Naive thymus-derived CD4-positive, alpha-beta T cell (primary cell): ENCODE measurements at regions of chr2 and their contacts with region 1.

Region 1: DNA sequence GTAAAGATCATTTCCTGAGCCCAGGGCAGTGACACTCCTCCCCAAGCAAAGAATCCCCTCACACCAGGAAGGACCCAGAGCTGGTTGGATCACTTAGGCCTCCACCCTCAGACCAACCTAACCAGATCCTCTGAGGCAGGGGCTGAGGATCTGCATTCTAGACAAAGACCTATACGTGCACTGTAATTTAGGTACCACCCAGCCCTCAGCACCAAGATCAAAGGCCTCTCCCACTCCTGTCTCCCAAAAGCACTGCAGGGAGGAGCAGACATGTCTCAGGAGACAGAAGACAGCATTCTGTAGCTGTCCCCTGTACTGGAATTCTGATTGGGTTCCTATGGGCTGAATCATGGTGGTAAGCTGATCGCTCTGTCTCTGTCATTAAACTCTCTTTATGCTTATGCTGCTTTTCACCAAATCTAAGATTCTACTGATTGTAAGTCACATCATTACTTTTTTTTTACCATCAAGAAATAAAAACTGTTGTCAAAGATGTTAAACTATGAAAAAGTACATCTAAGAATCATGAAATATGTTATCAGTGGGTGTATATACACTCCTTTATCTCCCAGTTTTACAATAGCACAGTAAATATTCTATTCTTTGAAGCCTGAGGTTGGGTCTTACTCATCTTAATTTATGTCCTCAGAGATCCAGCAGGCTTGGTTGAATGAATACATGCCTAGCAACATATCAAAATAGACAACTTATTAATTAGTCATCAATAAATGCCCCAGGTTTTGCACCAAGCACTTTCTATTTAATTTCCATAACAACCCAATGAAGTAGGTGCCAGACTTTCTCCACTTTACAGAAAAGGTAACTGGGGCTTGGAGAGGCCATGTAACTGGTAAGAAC is 28.3 kb downstream of the MCFD2 start:
- DNase-seq: no peak
- ATAC-seq: no peak
- H3K4me3 ChIP-seq: no peak overlapping the region
- H3K4me3 Mint-ChIP-seq: no peak overlapping the region
- H3K27ac ChIP-seq: no peak overlapping the region
- H3K27ac Mint-ChIP-seq: no peak overlapping the region
- H3K4me1 ChIP-seq: no peaks in the 10 kb centered on the region
- H3K4me1 Mint-ChIP-seq: peaks cover 0 to 2% (median 0%) of the 10 kb centered on the region in 7 donors
- H3K27me3 ChIP-seq: no peaks in the 10 kb centered on the region
- H3K27me3 Mint-ChIP-seq: peaks cover 0 to 31% (median 4%) of the 10 kb centered on the region in 5 donors

Region 2: GRCh38 chr2:45993476-45993991 is 893.7 kb before region 1 on chr2:
- CTCF ChIA-PET with region 1: no interaction called
- POLR2A ChIA-PET with region 1: no interaction called
- intact Hi-C with region 1: loop called in 1 of 2 experiments (anchors 1 kb)
- DNase-seq: peak in 8 of 9 donors; percentile 46 to 75 (median 64)
- ATAC-seq: peak; percentile 75
- H3K4me3 ChIP-seq: no peak overlapping the region
- H3K4me3 Mint-ChIP-seq: no peak overlapping the region
- H3K27ac ChIP-seq: no peak overlapping the region
- H3K27ac Mint-ChIP-seq: peak overlapping the region in 1 of 9 donors; percentile 36
- H3K4me1 ChIP-seq: no peaks in the 10 kb centered on the region
- H3K4me1 Mint-ChIP-seq: peaks cover 0 to 10% (median 6%) of the 10 kb centered on the region in 7 donors
- H3K27me3 ChIP-seq: no peaks in the 10 kb centered on the region
- H3K27me3 Mint-ChIP-seq: peaks cover 0 to 3% (median 0%) of the 10 kb centered on the region in 5 donors

Region 3: DNA sequence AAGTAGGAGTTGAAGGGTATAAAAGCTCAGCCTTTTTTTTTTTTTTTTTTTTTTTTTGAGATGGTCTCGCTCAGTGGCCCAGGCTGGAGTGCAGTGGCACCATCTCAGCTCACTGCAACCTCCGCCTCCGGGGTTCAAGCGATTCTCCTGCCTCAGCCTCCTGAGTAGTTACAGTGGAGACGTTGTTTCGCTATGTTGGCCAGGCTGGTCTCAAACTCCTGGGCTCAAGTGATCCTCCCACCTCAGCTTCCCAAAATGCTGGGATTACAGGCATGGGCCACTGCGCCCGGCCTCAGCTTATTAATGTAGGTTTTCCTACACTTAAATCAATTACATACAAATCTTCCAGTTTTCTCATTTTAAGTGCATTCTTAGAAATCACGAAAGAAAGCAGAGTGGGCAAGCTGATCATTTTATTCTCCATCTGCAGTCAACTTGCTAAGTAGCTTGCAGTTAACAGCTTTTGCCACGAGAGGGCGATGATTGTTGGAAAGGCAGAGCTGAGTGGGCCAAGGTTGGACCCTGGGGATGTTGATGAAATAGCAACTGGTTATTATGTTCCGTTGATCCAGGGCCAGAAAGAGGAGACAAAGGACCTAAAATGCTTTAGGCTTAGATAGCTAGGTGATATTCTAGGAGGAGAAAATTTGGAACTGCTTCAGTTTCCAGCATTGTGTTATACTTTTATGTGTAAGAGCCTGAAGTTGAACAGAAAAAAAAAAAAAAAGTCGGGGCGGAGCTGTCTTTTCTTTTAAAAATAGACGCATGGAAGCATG is 824.4 kb before region 1 on chr2:
- CTCF ChIA-PET with region 1: interaction called, 5 read pairs
- POLR2A ChIA-PET with region 1: no interaction called
- intact Hi-C with region 1: loop called in 1 of 2 experiments (anchors 5 kb)
- DNase-seq: peak; percentile 14 to 63 (median 50)
- ATAC-seq: peak; percentile 73
- H3K4me3 ChIP-seq: no peak overlapping the region
- H3K4me3 Mint-ChIP-seq: no peak overlapping the region
- H3K27ac ChIP-seq: no peak overlapping the region
- H3K27ac Mint-ChIP-seq: no peak overlapping the region
- H3K4me1 ChIP-seq: peaks cover 0 to 4% of the 10 kb centered on the region in 2 donors
- H3K4me1 Mint-ChIP-seq: peaks cover 0 to 18% (median 0%) of the 10 kb centered on the region in 7 donors
- H3K27me3 ChIP-seq: no peaks in the 10 kb centered on the region
- H3K27me3 Mint-ChIP-seq: peaks cover 0 to 2% (median 0%) of the 10 kb centered on the region in 5 donors

Region 4: GRCh38 chr2:46601328-46601963 is 285.8 kb before region 1 on chr2:
- CTCF ChIA-PET with region 1: no interaction called
- POLR2A ChIA-PET with region 1: no interaction called
- intact Hi-C with region 1: loop called in 1 of 2 experiments (anchors 1 kb)
- DNase-seq: peak in 4 of 9 donors; percentile 7 to 26 (median 14)
- ATAC-seq: no peak
- H3K4me3 ChIP-seq: no peak overlapping the region
- H3K4me3 Mint-ChIP-seq: no peak overlapping the region
- H3K27ac ChIP-seq: no peak overlapping the region
- H3K27ac Mint-ChIP-seq: no peak overlapping the region
- H3K4me1 ChIP-seq: no peaks in the 10 kb centered on the region
- H3K4me1 Mint-ChIP-seq: peaks cover 0 to 9% (median 4%) of the 10 kb centered on the region in 7 donors
- H3K27me3 ChIP-seq: no peaks in the 10 kb centered on the region
- H3K27me3 Mint-ChIP-seq: no peaks in the 10 kb centered on the region

Region 5: GRCh38 chr2:46632349-46632748 is 254.9 kb before region 1 on chr2:
- CTCF ChIA-PET with region 1: no interaction called
- POLR2A ChIA-PET with region 1: no interaction called
- intact Hi-C with region 1: loop called (anchors 1 kb)
- DNase-seq: peak in 2 of 9 donors; percentile 17 to 23
- ATAC-seq: no peak
- H3K4me3 ChIP-seq: no peak overlapping the region
- H3K4me3 Mint-ChIP-seq: no peak overlapping the region
- H3K27ac ChIP-seq: no peak overlapping the region
- H3K27ac Mint-ChIP-seq: no peak overlapping the region
- H3K4me1 ChIP-seq: peaks cover 0 to 7% of the 10 kb centered on the region in 2 donors
- H3K4me1 Mint-ChIP-seq: peaks cover 8 to 29% (median 10%) of the 10 kb centered on the region in 7 donors
- H3K27me3 ChIP-seq: no peaks in the 10 kb centered on the region
- H3K27me3 Mint-ChIP-seq: no peaks in the 10 kb centered on the region

Region 6: DNA sequence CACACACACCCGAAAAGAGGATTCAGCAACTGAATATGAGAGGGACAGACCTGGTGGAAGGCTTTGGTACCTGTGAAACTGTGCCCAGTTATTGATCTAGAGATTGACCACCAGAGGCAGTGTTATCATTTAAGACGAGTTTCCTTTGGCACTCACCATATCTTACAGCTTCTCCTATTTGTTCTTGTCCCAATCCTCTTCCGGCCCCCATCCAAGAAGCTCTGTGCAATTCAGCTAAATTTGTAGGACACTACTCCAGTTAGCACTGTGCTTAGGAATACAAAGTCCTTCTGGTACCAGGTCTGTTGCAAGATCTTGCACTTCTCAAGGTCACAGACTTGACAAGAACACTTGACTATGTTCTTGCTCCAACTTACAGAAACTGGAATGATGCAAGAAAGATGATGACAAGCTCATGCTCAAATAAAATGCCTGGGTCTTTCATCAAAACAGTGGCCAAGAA is 230.2 kb before region 1 on chr2:
- CTCF ChIA-PET with region 1: no interaction called
- POLR2A ChIA-PET with region 1: no interaction called
- intact Hi-C with region 1: loop called in 1 of 2 experiments (anchors 2 kb)
- DNase-seq: peak in 5 of 9 donors; percentile 4 to 17 (median 15)
- ATAC-seq: peak; percentile 55
- H3K4me3 ChIP-seq: no peak overlapping the region
- H3K4me3 Mint-ChIP-seq: no peak overlapping the region
- H3K27ac ChIP-seq: no peak overlapping the region
- H3K27ac Mint-ChIP-seq: no peak overlapping the region
- H3K4me1 ChIP-seq: no peaks in the 10 kb centered on the region
- H3K4me1 Mint-ChIP-seq: peaks cover 0 to 2% (median 0%) of the 10 kb centered on the region in 7 donors
- H3K27me3 ChIP-seq: no peaks in the 10 kb centered on the region
- H3K27me3 Mint-ChIP-seq: peaks cover 0 to 25% (median 0%) of the 10 kb centered on the region in 5 donors

Region 7: GRCh38 chr2:48433682-48434081 is 1546.4 kb after region 1 on chr2:
- CTCF ChIA-PET with region 1: no interaction called
- POLR2A ChIA-PET with region 1: no interaction called
- intact Hi-C with region 1: no loop called
- DNase-seq: no peak
- ATAC-seq: peak; percentile 38
- H3K4me3 ChIP-seq: no peak overlapping the region
- H3K4me3 Mint-ChIP-seq: no peak overlapping the region
- H3K27ac ChIP-seq: no peak overlapping the region
- H3K27ac Mint-ChIP-seq: no peak overlapping the region
- H3K4me1 ChIP-seq: no peaks in the 10 kb centered on the region
- H3K4me1 Mint-ChIP-seq: peaks cover 0 to 4% (median 0%) of the 10 kb centered on the region in 7 donors
- H3K27me3 ChIP-seq: no peaks in the 10 kb centered on the region
- H3K27me3 Mint-ChIP-seq: peaks cover 0 to 28% (median 0%) of the 10 kb centered on the region in 5 donors